ENCODE measurements at regions of chr6 and their contacts with region 1.

Region 1: GRCh38 chr6:47477497-47478232 is at the start of gene CD2AP:
- DNase-seq: peak; percentile 92
- H3K4me3 Mint-ChIP-seq: peak within 1 kb of the TSS; percentile 98
- H3K27ac Mint-ChIP-seq: peak within 1 kb of the TSS; percentile 95
- H3K4me1 Mint-ChIP-seq: peaks cover 27% of the 10 kb centered on the region
- H3K27me3 Mint-ChIP-seq: no peaks in the 10 kb centered on the region
- total RNA-seq, gene CD2AP: 22.6 to 23.6 TPM

Region 2: DNA sequence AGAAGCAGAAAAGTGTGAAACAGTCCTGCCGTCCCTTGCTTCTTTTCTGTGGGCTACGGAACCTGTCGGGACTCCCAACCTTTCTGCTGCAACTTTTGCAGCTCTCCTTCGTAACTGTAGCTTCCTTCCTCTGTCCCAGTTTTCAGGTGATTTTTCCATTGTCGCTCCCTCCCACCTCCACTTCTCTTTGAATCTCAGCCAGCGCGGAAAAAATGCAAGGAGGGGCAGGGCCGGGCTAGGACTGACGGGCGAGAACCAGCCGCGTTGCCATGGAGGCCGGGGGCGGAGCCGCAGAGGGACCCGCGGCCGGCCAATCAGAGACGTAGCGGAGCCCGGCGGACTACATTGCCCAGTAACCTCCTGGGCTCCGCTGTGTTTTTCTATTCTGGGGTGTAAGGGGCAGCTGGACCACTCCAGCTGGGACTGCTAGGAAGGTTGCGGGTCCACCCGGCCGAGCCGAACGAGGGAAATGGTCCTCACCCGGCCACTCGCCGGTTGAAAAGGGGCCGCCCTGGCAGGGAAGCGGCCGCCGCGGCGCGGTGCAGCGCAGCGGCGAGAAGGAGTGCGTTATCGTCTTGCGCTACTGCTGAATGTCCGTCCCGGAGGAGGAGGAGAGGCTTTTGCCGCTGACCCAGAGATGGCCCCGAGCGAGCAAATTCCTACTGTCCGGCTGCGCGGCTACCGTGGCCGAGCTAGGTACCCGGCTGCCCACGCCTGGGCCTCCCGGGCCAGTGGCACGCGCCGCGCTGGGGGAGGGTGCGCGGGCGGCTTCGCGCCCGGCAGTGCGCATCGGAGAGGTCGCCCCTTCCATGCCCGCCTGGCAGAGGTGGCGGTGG is 824.8 kb before region 1 on chr6 and contains the starts of genes CYP39A1 and SLC25A27:
- CTCF ChIA-PET with region 1: no interaction called
- POLR2A ChIA-PET with region 1: no interaction called
- intact Hi-C with region 1: loop called (anchors 5 kb)
- DNase-seq: peak; percentile 89
- H3K4me3 Mint-ChIP-seq: peak within 1 kb of the TSS; percentile 76
- H3K27ac Mint-ChIP-seq: no peak within 1 kb of the TSS
- H3K4me1 Mint-ChIP-seq: peaks cover 13% of the 10 kb centered on the region
- H3K27me3 Mint-ChIP-seq: peaks cover 44% of the 10 kb centered on the region
- total RNA-seq, gene CYP39A1: not detected
- total RNA-seq, gene SLC25A27: 0.53 to 0.78 TPM

Region 3: DNA sequence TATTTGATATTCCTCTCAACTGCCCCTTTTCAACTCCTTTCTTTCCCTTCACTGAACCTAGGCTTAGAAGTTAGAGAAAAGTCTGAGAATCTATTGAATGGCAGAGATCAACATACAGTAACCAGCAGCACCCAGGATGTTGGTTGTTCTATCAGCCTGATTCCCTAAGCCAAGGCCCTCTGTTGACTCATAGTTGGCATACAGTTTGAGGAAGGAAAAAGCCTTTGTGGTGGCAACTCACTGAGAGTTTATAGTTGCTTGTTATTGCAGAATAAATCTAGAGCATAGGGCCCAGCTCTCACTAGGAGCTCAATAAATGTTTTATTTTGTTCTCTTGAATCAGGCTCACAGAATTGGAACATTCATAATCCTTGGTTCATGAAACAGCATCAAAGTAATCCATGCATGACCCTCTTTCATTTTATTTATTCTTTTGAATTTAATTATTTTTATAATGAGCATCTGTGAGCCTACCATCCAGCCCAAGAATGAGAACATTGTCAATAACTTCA is 316.4 kb before region 1 on chr6:
- CTCF ChIA-PET with region 1: no interaction called
- POLR2A ChIA-PET with region 1: no interaction called
- intact Hi-C with region 1: no loop called
- DNase-seq: no peak
- H3K4me3 Mint-ChIP-seq: no peak overlapping the region
- H3K27ac Mint-ChIP-seq: no peak overlapping the region
- H3K4me1 Mint-ChIP-seq: no peaks in the 10 kb centered on the region
- H3K27me3 Mint-ChIP-seq: no peaks in the 10 kb centered on the region

Region 4: DNA sequence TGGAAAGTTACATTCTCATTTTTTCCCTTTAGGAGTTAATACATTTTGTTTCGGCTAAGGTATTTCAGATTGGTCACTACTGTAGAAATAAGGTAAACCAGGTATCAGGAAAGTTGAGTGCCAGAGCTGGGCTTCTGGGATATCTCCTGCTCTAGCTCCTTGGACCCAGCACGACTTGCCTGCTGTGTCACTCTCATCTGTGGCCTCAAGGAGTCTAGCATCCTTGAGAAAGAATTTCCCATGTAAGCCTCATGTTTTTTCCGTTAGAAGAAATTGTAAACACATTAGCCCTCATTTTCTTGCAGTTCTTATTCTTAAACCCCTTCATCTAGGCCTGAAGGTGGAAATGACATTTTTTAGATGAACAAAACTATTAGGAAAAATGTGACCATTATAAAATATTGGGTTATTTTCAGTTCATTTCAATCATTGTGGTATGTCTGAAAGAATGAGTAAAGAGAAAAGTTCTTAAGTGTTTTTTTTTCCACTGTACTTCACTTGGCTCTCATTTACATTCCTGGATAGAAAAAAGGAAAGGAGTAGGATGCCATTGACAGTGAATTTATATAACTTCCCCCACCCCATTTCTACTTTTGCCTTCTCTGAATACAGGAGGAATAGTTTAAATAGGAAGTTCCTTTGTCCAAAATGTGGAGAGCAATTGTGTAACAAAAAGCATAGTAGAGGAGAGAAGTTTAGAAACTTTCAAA is 46.6 kb after region 1 on chr6:
- CTCF ChIA-PET with region 1: no interaction called
- POLR2A ChIA-PET with region 1: no interaction called
- intact Hi-C with region 1: no loop called
- DNase-seq: no peak
- H3K4me3 Mint-ChIP-seq: no peak overlapping the region
- H3K27ac Mint-ChIP-seq: no peak overlapping the region
- H3K4me1 Mint-ChIP-seq: peaks cover 23% of the 10 kb centered on the region
- H3K27me3 Mint-ChIP-seq: no peaks in the 10 kb centered on the region

Region 5: DNA sequence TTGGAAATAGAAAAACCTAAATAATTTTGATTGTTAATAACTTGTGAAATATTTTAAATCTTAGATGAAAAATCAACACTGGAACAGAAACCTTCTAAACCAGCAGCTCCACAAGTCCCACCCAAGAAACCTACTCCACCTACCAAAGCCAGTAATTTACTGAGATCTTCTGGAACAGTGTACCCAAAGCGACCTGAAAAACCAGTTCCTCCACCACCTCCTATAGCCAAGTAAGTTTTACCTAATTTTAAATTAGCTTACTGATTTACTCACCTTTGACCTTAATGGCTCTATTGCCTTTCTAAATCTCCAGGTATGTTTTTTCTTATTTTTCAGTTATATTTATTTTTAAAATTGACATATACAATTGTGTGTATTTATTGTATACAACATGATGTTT is 118.1 kb after region 1 on chr6:
- CTCF ChIA-PET with region 1: no interaction called
- POLR2A ChIA-PET with region 1: no interaction called
- intact Hi-C with region 1: loop called (anchors 5 kb)
- DNase-seq: no peak
- H3K4me3 Mint-ChIP-seq: no peak overlapping the region
- H3K27ac Mint-ChIP-seq: no peak overlapping the region
- H3K4me1 Mint-ChIP-seq: peaks cover 3% of the 10 kb centered on the region
- H3K27me3 Mint-ChIP-seq: no peaks in the 10 kb centered on the region

Region 6: GRCh38 chr6:49462927-49463611 is 1985.4 kb after region 1 on chr6 and contains the starts of genes CENPQ and MMUT:
- CTCF ChIA-PET with region 1: no interaction called
- POLR2A ChIA-PET with region 1: no interaction called
- intact Hi-C with region 1: loop called (anchors 5 kb)
- DNase-seq: peak; percentile 95
- H3K4me3 Mint-ChIP-seq: peak within 1 kb of the TSS; percentile 97
- H3K27ac Mint-ChIP-seq: peak within 1 kb of the TSS; percentile 87
- H3K4me1 Mint-ChIP-seq: peaks cover 31% of the 10 kb centered on the region
- H3K27me3 Mint-ChIP-seq: no peaks in the 10 kb centered on the region
- total RNA-seq, gene CENPQ: 20.5 to 21.4 TPM
- total RNA-seq, gene MMUT: 16.9 to 18.1 TPM